Prostate gland (tissue), 2 donors: ENCODE measurements at regions of chr11 and their contacts with region 1.

Region 1: GRCh38 chr11:1935156-1936071 is 11.7 kb upstream of the MRPL23 start:
- DNase-seq: no peak
- H3K4me3 ChIP-seq: no peak overlapping the region
- H3K27ac ChIP-seq: no peak overlapping the region
- H3K4me1 ChIP-seq: no peaks in the 10 kb centered on the region
- H3K27me3 ChIP-seq: peaks cover 2% of the 10 kb centered on the region
- CTCF ChIP-seq: no peak
- POLR2A ChIP-seq: no peak

Region 2: GRCh38 chr11:1912289-1912878 is 23.0 kb before region 1 on chr11:
- intact Hi-C with region 1: loop called (anchors 2 kb)
- DNase-seq: no peak
- H3K4me3 ChIP-seq: no peak overlapping the region
- H3K27ac ChIP-seq: no peak overlapping the region
- H3K4me1 ChIP-seq: no peaks in the 10 kb centered on the region
- H3K27me3 ChIP-seq: no peaks in the 10 kb centered on the region
- CTCF ChIP-seq: no peak
- POLR2A ChIP-seq: no peak

Region 3: DNA sequence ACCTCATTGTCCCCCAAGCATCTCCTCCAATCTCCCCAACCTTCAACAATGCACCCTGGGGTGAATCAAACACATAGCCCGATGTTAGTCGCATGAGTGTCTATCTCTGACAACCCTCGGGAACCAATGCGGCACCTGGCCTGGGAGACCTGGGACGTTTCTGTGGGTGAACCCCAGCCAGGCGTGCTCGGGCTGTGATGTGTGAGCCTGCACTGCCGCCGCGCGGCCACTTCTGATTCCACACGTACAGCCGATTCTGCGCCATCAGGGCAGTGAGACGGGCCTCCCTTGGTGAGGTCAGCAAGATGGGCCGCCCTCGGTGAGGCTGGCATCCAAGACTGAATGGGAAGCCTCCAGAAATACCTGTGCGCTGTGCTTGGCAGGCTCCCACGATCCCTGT is 67.4 kb after region 1 on chr11:
- intact Hi-C with region 1: no loop called
- DNase-seq: no peak
- H3K4me3 ChIP-seq: no peak overlapping the region
- H3K27ac ChIP-seq: no peak overlapping the region
- H3K4me1 ChIP-seq: no peaks in the 10 kb centered on the region
- H3K27me3 ChIP-seq: no peaks in the 10 kb centered on the region
- CTCF ChIP-seq: no peak
- POLR2A ChIP-seq: no peak

Region 4: DNA sequence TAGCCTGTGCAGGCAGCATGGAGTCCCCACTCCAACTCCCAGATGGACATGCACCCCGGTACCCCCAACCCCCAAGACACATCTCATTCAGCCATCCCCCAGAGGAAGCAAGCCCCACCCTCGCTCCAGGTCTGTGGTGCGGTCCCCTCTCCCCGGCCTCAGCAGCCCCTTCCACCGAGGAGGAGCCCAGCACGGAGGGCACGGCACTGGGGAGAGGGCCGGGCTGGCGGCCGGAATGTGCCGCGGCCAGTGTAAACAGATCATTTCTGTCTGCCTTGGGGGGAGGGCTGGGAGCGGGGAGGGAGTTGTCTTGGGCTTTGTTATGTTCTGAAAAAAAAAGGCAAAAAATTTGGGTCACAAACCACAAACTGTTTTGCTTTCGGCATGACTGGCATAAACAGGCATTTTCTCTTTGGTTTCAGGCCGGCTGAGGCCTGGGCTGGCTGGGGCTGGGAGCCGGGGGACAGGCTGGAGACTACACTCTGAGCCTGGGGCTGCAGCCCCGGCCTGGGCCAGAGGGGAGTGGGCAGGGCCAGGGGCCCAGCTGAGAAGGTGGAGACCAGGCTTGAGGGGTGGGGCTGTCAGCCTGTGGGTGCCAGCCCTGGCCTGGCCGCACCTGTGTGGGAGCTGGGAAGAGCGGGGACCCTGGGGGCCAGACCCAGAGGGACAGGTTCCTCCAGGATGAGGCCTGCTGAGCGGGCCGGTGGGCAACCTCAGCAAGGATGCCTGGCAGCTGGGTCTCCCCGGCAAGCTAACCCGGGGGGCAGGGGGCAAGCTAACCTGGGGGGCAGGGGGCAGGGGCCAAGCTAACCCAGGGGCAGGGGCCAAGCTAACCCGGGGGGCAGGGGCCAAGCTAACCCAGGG is 187.0 kb after region 1 on chr11:
- intact Hi-C with region 1: no loop called
- DNase-seq: no peak
- H3K4me3 ChIP-seq: no peak overlapping the region
- H3K27ac ChIP-seq: no peak overlapping the region
- H3K4me1 ChIP-seq: no peaks in the 10 kb centered on the region
- H3K27me3 ChIP-seq: peaks cover 5% of the 10 kb centered on the region
- CTCF ChIP-seq: no peak
- POLR2A ChIP-seq: no peak